ENCODE measurements at regions of chr20 and their contacts with region 1.

Region 1: DNA sequence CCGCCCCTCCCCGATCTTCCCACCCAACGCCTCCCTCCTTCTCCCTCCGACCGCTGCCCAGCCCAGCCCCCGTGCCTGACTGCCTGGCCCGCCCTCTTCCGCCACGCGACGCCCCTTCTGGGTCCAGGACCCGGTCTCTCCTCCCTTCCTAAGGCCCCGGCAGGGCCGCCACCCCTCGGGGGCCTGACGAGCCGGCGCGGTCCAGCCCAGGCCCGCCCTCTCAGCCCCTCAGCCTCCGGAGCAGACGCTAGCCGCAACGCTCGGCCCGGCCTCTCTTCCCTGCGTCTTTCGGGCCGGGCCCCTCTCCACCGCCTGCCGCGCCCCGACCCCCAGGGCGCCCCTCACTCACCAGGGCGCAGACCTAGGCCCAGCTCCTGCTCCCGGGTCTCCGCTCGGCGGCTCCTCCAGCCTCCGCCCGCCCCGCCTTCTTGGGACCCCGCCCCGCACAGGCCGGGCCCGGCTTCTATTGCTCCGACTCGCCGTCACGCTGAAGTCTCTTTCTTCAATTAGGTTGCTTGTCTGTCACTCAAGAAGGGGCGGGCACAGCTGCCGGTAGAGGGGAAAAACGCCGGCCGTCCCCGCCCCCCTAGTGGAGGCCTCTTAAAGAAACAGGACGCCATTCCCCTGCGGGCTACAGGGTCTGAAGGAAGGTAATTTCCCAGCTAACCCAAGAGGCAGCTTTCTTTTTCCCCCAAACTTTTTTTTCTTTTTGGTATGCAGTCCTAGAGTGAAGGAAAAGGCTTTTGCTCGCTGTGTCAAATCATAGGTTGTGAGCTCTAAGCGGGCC is at the start of gene ELMO2:
- DNase-seq: peak; percentile 97
- H3K4me3 Mint-ChIP-seq: peak within 1 kb of the TSS; percentile 90
- H3K27ac Mint-ChIP-seq: peak within 1 kb of the TSS; percentile 67
- H3K4me1 Mint-ChIP-seq: peaks cover 25% of the 10 kb centered on the region
- H3K27me3 Mint-ChIP-seq: no peaks in the 10 kb centered on the region
- CTCF ChIP-seq: no peak
- total RNA-seq, gene ELMO2: 21.1 and 31.7 TPM in 2 replicates

Region 2: GRCh38 chr20:46070215-46070900 is 336.0 kb before region 1 on chr20:
- CTCF ChIA-PET with region 1: no interaction called
- POLR2A ChIA-PET with region 1: no interaction called
- intact Hi-C with region 1: no loop called
- DNase-seq: no peak
- H3K4me3 Mint-ChIP-seq: no peak overlapping the region
- H3K27ac Mint-ChIP-seq: no peak overlapping the region
- H3K4me1 Mint-ChIP-seq: peaks cover 8% of the 10 kb centered on the region
- H3K27me3 Mint-ChIP-seq: no peaks in the 10 kb centered on the region
- CTCF ChIP-seq: no peak

Region 3: DNA sequence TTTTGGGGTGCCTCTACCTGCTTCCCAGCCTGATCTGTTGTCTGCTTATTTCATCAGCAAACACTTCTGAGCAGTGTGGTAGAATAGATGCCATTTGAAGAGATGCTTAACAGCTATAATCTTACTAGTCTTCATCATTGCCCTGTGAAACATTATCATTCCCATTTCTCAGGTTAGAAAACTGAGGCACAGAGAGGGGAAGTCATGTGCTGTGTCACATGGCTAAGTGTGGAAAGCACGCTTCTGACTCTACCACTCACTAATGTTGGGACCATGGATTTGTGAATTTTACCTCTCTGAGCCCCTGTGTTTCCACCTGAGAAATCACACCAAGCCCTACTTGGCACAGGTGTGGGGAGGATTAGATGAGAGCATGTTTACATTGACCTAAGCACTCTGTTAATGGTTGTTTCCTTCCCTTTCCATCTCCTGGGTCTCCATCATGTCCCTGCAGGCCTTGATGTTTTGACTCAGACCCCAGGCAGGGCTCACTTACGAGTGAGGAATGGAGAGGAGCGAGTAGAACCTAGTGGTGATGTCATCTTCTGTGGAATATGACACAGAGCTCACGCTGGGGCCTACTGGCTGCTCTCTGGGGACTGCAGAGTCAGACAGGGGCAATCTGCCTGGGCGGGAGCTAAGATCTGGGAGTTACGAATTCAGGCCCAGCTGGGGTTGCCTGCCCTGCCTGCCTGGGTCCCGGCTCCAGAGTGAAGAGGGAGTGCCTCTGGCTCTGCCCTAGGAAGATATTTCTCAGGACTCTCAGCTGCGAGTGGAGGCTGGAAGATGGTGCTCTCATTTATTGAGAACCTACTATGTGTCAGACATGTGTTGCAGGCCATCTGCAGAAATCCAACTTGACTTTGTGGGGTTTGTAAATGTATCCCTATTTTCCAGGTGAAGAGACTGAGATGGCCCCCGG is 162.4 kb before region 1 on chr20:
- CTCF ChIA-PET with region 1: no interaction called
- POLR2A ChIA-PET with region 1: no interaction called
- intact Hi-C with region 1: no loop called
- DNase-seq: no peak
- H3K4me3 Mint-ChIP-seq: no peak overlapping the region
- H3K27ac Mint-ChIP-seq: no peak overlapping the region
- H3K4me1 Mint-ChIP-seq: no peaks in the 10 kb centered on the region
- H3K27me3 Mint-ChIP-seq: peaks cover 37% of the 10 kb centered on the region
- CTCF ChIP-seq: no peak

Region 4: GRCh38 chr20:46375771-46376170 is 30.6 kb before region 1 on chr20:
- CTCF ChIA-PET with region 1: interaction called, 5 read pairs
- POLR2A ChIA-PET with region 1: interaction called, 10 read pairs
- intact Hi-C with region 1: no loop called
- DNase-seq: no peak
- H3K4me3 Mint-ChIP-seq: no peak overlapping the region
- H3K27ac Mint-ChIP-seq: no peak overlapping the region
- H3K4me1 Mint-ChIP-seq: peaks cover 15% of the 10 kb centered on the region
- H3K27me3 Mint-ChIP-seq: no peaks in the 10 kb centered on the region
- CTCF ChIP-seq: no peak

Region 5: DNA sequence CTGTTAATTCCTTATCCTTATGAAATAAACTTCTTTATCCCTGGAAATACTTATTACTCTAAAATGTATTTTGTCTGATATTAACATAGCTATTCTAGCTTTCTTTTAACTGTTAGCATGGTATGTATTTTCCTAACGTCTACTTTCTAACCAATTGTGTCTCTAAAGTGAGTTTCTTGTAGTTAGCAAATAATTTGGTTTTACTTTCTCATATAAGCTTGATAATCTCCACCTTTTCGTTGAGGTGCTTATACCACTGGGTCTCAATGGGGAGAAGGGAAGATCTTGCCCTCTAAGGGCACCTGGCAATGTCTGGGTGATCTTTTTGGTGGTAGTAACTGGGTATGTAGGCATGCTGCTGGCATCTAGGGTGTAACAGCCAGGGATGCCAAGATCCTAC is 81.2 kb after region 1 on chr20:
- CTCF ChIA-PET with region 1: no interaction called
- POLR2A ChIA-PET with region 1: no interaction called
- intact Hi-C with region 1: no loop called
- DNase-seq: no peak
- H3K4me3 Mint-ChIP-seq: no peak overlapping the region
- H3K27ac Mint-ChIP-seq: no peak overlapping the region
- H3K4me1 Mint-ChIP-seq: no peaks in the 10 kb centered on the region
- H3K27me3 Mint-ChIP-seq: peaks cover 93% of the 10 kb centered on the region
- CTCF ChIP-seq: no peak